ENCODE measurements at regions of chr12 and their contacts with region 1.

Region 1: GRCh38 chr12:54723379-54724256 is 75.5 kb upstream of the DCD start:
- DNase-seq: peak; percentile 47
- ATAC-seq: peak; percentile 78
- H3K4me3 Mint-ChIP-seq: no peak overlapping the region
- H3K27ac Mint-ChIP-seq: no peak overlapping the region
- H3K4me1 Mint-ChIP-seq: peaks cover 7% of the 10 kb centered on the region
- H3K27me3 Mint-ChIP-seq: peaks cover 28% of the 10 kb centered on the region

Region 2: DNA sequence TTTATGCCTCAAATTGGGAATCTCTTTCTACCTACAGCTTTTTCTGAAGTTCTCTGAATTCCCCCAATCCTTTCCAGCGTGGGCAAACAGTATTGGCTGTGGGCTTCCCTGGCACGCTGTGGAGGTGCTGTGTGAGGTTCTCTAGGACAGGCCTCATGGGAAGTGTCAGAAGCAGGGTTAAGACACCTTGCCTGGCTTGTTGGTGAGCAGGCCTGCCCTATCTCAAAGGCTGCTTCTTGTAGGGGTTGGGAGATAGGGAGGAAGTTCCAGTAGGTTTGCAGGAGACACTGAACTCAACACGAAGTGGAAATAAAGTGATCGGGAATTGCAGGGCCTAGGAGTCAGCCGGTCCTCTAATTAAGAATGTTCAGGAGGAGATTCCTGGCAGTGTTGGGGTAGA is 45.5 kb before region 1 on chr12:
- CTCF ChIA-PET with region 1: no interaction called
- DNase-seq: no peak
- ATAC-seq: no peak
- H3K4me3 Mint-ChIP-seq: no peak overlapping the region
- H3K27ac Mint-ChIP-seq: no peak overlapping the region
- H3K4me1 Mint-ChIP-seq: no peaks in the 10 kb centered on the region
- H3K27me3 Mint-ChIP-seq: peaks cover 57% of the 10 kb centered on the region

Region 3: GRCh38 chr12:54689984-54690383 is 33.6 kb before region 1 on chr12:
- CTCF ChIA-PET with region 1: no interaction called
- DNase-seq: no peak
- ATAC-seq: no peak
- H3K4me3 Mint-ChIP-seq: no peak overlapping the region
- H3K27ac Mint-ChIP-seq: no peak overlapping the region
- H3K4me1 Mint-ChIP-seq: no peaks in the 10 kb centered on the region
- H3K27me3 Mint-ChIP-seq: peaks cover 53% of the 10 kb centered on the region

Region 4: DNA sequence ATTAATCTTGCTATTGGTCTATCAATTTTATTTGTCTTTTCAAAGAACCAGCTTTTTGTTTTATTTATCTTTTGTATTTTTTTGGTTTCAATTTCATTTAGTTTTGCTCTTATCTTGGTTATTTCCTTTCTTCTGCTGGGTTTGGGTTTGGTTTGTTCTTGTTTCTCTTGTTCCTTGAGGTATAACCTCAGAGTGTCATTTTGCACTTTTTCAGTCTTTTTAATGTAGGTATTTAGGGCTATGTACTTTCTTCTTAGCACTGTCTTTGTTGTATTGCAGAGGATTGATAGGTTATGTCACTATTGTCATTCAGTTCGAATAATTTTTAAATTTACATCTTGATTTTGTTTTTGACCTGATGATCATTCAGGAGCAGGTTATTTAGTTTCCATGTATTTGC is 17.3 kb after region 1 on chr12:
- CTCF ChIA-PET with region 1: interaction called, 10 read pairs
- DNase-seq: no peak
- ATAC-seq: peak; percentile 66
- H3K4me3 Mint-ChIP-seq: peak overlapping the region; percentile 43
- H3K27ac Mint-ChIP-seq: peak overlapping the region; percentile 79
- H3K4me1 Mint-ChIP-seq: peaks cover 57% of the 10 kb centered on the region
- H3K27me3 Mint-ChIP-seq: no peaks in the 10 kb centered on the region

Region 5: GRCh38 chr12:54853995-54854566 is 130.5 kb after region 1 on chr12 and contains the start of gene MUCL1:
- CTCF ChIA-PET with region 1: interaction called, 14 read pairs
- DNase-seq: peak; percentile 84
- ATAC-seq: peak; percentile 100
- H3K4me3 Mint-ChIP-seq: no peak within 1 kb of the TSS
- H3K27ac Mint-ChIP-seq: no peak within 1 kb of the TSS
- H3K4me1 Mint-ChIP-seq: peaks cover 6% of the 10 kb centered on the region
- H3K27me3 Mint-ChIP-seq: no peaks in the 10 kb centered on the region
- total RNA-seq, gene MUCL1: not detected